SK-N-SH (cell line): ENCODE measurements at regions of chr7 and their contacts with region 1.

Region 1: GRCh38 chr7:55255496-55256435 is 109.4 kb upstream of the LANCL2 start:
- DNase-seq: peak; percentile 93
- H3K4me3 ChIP-seq: peak overlapping the region; percentile 56 to 67
- H3K27ac ChIP-seq: peak overlapping the region; percentile 50 to 58; a peak in 3 of 4 replicates
- H3K4me1 ChIP-seq: peaks cover 0 to 15% of the 10 kb centered on the region in 2 experiments; a peak in 1 of 4 replicates
- H3K27me3 ChIP-seq: no peaks in the 10 kb centered on the region
- CTCF ChIP-seq: peak; percentile 99
- EP300 ChIP-seq: no peak
- RAD21 ChIP-seq: peak; percentile 99

Region 2: GRCh38 chr7:54788664-54789063 is 467.1 kb before region 1 on chr7:
- CTCF ChIA-PET with region 1: interaction called, 1,068 read pairs
- POLR2A ChIA-PET with region 1: interaction called, 8 read pairs
- DNase-seq: peak; percentile 73
- H3K4me3 ChIP-seq: no peak overlapping the region
- H3K27ac ChIP-seq: 0 out of 4 replicates have a peak overlapping the region, but pooled peaks of 1 of the 2 experiments have one; percentile 6
- H3K4me1 ChIP-seq: peaks cover 0 to 4% of the 10 kb centered on the region in 2 experiments; a peak in 1 of 4 replicates
- H3K27me3 ChIP-seq: no peaks in the 10 kb centered on the region
- CTCF ChIP-seq: peak; percentile 96
- EP300 ChIP-seq: no peak
- RAD21 ChIP-seq: peak; percentile 97

Region 3: DNA sequence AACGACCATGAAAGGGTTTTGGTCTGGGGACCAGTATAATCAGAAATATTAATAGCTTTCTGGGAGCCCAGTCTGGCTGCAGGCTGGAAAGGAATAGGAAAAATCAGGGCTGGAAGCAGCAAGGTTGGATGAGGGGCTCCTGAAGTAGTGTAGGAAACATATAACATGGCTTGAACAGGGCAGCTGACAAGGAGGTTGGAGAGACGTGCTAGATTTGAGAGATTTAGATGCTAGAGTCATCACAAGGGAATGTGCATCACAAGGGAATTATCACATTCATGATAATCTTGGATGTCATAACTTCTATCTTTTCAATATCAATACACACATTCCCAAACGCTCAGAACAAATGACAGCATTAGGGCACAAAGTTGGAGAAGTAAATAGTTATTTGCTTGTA is 357.9 kb before region 1 on chr7:
- CTCF ChIA-PET with region 1: interaction called, 13 read pairs
- POLR2A ChIA-PET with region 1: no interaction called
- DNase-seq: no peak
- H3K4me3 ChIP-seq: no peak overlapping the region
- H3K27ac ChIP-seq: no peak overlapping the region
- H3K4me1 ChIP-seq: no peaks in the 10 kb centered on the region
- H3K27me3 ChIP-seq: no peaks in the 10 kb centered on the region
- CTCF ChIP-seq: no peak
- EP300 ChIP-seq: no peak
- RAD21 ChIP-seq: no peak

Region 4: DNA sequence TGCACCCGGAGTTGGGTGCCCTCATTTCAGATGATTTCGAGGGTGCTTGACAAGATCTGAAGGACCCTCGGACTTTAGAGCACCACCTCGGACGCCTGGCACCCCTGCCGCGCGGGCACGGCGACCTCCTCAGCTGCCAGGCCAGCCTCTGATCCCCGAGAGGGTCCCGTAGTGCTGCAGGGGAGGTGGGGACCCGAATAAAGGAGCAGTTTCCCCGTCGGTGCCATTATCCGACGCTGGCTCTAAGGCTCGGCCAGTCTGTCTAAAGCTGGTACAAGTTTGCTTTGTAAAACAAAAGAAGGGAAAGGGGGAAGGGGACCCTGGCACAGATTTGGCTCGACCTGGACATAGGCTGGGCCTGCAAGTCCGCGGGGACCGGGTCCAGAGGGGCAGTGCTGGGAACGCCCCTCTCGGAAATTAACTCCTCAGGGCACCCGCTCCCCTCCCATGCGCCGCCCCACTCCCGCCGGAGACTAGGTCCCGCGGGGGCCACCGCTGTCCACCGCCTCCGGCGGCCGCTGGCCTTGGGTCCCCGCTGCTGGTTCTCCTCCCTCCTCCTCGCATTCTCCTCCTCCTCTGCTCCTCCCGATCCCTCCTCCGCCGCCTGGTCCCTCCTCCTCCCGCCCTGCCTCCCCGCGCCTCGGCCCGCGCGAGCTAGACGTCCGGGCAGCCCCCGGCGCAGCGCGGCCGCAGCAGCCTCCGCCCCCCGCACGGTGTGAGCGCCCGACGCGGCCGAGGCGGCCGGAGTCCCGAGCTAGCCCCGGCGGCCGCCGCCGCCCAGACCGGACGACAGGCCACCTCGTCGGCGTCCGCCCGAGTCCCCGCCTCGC is 237.2 kb before region 1 on chr7 and contains the start of gene EGFR:
- CTCF ChIA-PET with region 1: interaction called, 61 read pairs
- POLR2A ChIA-PET with region 1: interaction called, 4 read pairs
- DNase-seq: peak; percentile 91
- H3K4me3 ChIP-seq: peak within 1 kb of the TSS; percentile 83 to 94
- H3K27ac ChIP-seq: peak within 1 kb of the TSS; percentile 53 to 67
- H3K4me1 ChIP-seq: peaks cover 4 to 13% of the 10 kb centered on the region in 2 experiments; a peak in 2 of 4 replicates
- H3K27me3 ChIP-seq: no peaks in the 10 kb centered on the region
- CTCF ChIP-seq: no peak
- EP300 ChIP-seq: no peak
- RAD21 ChIP-seq: no peak
- polyA plus RNA-seq, gene EGFR: 30.7 and 37.6 TPM in 2 replicates

Region 5: GRCh38 chr7:55092186-55092974 is 163.4 kb before region 1 on chr7:
- CTCF ChIA-PET with region 1: interaction called, 35 read pairs
- POLR2A ChIA-PET with region 1: no interaction called
- DNase-seq: peak; percentile 76
- H3K4me3 ChIP-seq: no peak overlapping the region
- H3K27ac ChIP-seq: peak overlapping the region; percentile 4 to 72; a peak in 3 of 4 replicates
- H3K4me1 ChIP-seq: peaks cover 29 to 38% of the 10 kb centered on the region in 2 experiments
- H3K27me3 ChIP-seq: no peaks in the 10 kb centered on the region
- CTCF ChIP-seq: no peak
- EP300 ChIP-seq: peak; percentile 4 to 6; a peak in 1 of 4 replicates
- RAD21 ChIP-seq: no peak; the same call in 1 of the 2 replicates

Region 6: DNA sequence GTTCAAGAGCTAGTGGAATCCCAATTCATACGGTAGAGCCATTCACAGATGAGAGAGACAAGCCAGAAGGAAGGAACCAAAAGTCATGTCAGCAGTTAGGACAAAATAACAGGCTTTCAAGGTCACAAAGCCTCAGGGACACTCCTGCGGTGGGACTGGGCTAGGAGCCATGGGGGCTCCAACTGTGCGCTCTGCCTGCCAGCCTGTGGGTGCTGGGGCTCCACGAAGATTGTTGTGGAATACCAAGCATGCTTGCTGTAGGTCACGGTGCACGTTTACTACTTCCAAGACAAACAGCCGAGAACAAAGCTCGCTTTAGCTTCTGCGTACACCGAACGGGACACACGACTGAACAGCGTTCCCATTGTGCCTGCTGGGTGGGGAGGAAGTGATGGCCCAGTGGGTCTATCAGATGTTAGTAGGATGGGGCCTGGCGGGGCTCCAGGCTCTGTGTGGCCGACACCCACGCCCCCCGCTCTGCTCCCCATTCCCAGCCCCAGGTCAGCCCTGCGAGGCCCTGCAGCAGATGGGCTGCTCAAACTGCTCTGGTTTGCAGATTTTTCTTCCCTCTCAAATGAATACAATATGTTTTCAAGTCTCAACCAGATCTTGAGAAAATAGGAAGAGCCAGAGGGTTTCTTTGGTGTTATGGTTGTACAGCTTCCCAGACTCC is 78.0 kb before region 1 on chr7:
- CTCF ChIA-PET with region 1: interaction called, 44 read pairs
- POLR2A ChIA-PET with region 1: no interaction called
- DNase-seq: peak; percentile 75
- H3K4me3 ChIP-seq: no peak overlapping the region
- H3K27ac ChIP-seq: peak overlapping the region in 1 of 2 experiments; percentile 24; a peak in 2 of 4 replicates
- H3K4me1 ChIP-seq: peaks cover 0 to 51% of the 10 kb centered on the region in 2 experiments; a peak in 3 of 4 replicates
- H3K27me3 ChIP-seq: no peaks in the 10 kb centered on the region
- CTCF ChIP-seq: no peak
- EP300 ChIP-seq: no peak; a peak in 1 of 4 replicates
- RAD21 ChIP-seq: no peak

Region 7: DNA sequence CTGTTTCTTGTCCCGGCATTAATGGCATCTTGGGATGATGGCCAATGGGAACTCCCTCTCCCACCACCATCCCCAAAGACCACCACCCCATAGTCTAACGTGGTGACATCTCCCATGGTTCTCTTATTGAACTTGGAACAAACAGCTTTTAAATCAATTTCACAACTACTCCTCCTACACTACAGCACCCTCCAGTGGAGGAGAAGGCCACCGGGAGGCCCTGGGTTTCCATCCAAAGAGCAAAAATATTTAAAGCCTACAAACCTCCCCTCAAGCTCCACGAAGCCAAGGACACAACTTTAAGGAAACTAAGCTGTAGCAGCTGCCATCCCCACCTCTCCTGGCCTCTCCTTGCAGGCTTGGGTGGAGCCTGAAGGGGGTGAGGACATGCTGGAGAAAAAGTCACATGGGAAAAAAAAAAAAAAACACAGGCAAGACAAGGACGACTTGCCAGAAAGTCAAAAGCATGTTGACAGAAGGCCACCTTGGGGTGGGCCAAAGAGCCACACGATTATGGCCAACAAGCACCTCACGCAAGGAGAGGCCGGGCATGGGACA is 15.4 kb after region 1 on chr7:
- CTCF ChIA-PET with region 1: interaction called, 131 read pairs
- POLR2A ChIA-PET with region 1: no interaction called
- DNase-seq: no peak
- H3K4me3 ChIP-seq: no peak overlapping the region
- H3K27ac ChIP-seq: no peak overlapping the region
- H3K4me1 ChIP-seq: no peaks in the 10 kb centered on the region; a peak in 1 of 4 replicates
- H3K27me3 ChIP-seq: no peaks in the 10 kb centered on the region
- CTCF ChIP-seq: peak; percentile 61
- EP300 ChIP-seq: no peak
- RAD21 ChIP-seq: peak; percentile 48